CD4-positive, alpha-beta T cell (primary cell): ENCODE measurements at regions of chr16 and their contacts with region 1.

Region 1: GRCh38 chr16:66894948-66895688 is 14.8 kb downstream of the PDP2 start:
- DNase-seq: peak; percentile 27 to 80 (median 51)
- ATAC-seq: peak; percentile 93
- H3K4me3 ChIP-seq: no peak overlapping the region
- H3K4me3 Mint-ChIP-seq: no peak overlapping the region
- H3K27ac ChIP-seq: no peak overlapping the region
- H3K27ac Mint-ChIP-seq: no peak overlapping the region
- H3K4me1 ChIP-seq: peaks cover 10% of the 10 kb centered on the region
- H3K4me1 Mint-ChIP-seq: peaks cover 8% of the 10 kb centered on the region
- H3K27me3 ChIP-seq: no peaks in the 10 kb centered on the region
- H3K27me3 Mint-ChIP-seq: no peaks in the 10 kb centered on the region
- CTCF ChIP-seq: peak; percentile 42

Region 2: DNA sequence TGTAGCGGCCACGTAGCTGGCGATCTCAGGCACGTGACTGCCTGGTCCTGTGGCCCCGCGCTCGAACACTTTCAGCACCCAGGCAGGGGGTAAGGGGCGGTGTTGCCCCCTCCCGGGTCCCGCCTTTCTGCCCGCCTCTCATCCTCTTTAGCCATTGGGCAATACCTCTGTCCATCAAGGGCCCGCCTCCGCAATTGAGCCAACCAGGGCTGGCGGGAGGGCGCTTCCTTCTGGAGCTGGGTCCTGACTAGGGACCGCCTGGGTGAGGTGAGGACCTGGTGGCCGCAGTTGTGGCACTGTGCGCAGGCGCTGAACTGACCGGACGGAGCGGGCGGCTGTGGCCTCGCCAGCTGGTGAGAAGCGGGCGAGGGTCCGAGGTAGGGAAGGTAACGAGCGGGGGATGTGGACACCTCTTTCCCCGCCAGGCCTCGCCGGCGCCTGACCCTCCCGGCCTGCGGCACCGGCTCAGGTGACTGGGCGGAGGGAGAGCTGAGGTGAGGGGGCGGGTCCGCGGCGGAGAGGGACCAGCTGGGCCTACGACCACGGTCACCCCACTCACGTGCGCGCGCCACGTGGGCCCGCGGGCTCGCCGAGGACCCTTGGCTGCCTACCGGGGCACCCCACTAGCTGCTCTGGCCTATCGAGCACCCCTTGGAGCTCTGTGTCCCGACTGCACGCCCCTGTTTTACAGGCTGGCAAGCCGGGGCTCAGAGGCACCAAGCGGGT is 14.7 kb before region 1 on chr16 and contains the start of gene PDP2:
- CTCF ChIA-PET with region 1: interaction called, 4 read pairs
- POLR2A ChIA-PET with region 1: interaction called, 10 read pairs
- intact Hi-C with region 1: no loop called
- DNase-seq: peak; percentile 74 to 95 (median 86)
- ATAC-seq: peak; percentile 98
- H3K4me3 ChIP-seq: peak within 1 kb of the TSS; percentile 93
- H3K4me3 Mint-ChIP-seq: peak within 1 kb of the TSS; percentile 100
- H3K27ac ChIP-seq: no peak within 1 kb of the TSS
- H3K27ac Mint-ChIP-seq: peak within 1 kb of the TSS; percentile 75
- H3K4me1 ChIP-seq: peaks cover 32% of the 10 kb centered on the region
- H3K4me1 Mint-ChIP-seq: peaks cover 33% of the 10 kb centered on the region
- H3K27me3 ChIP-seq: no peaks in the 10 kb centered on the region
- H3K27me3 Mint-ChIP-seq: no peaks in the 10 kb centered on the region
- CTCF ChIP-seq: no peak
- total RNA-seq, gene PDP2: 3.3 to 5.9 TPM

Region 3: GRCh38 chr16:66928702-66929388 is 33.7 kb after region 1 on chr16:
- CTCF ChIA-PET with region 1: interaction called, 8 read pairs
- POLR2A ChIA-PET with region 1: no interaction called
- intact Hi-C with region 1: loop called in 1 of 2 experiments (anchors 2 kb)
- DNase-seq: peak in 5 of 14 experiments; percentile 19 to 51 (median 32)
- ATAC-seq: peak; percentile 30
- H3K4me3 ChIP-seq: no peak overlapping the region
- H3K4me3 Mint-ChIP-seq: no peak overlapping the region
- H3K27ac ChIP-seq: no peak overlapping the region
- H3K27ac Mint-ChIP-seq: no peak overlapping the region
- H3K4me1 ChIP-seq: peaks cover 33% of the 10 kb centered on the region
- H3K4me1 Mint-ChIP-seq: peaks cover 30% of the 10 kb centered on the region
- H3K27me3 ChIP-seq: peaks cover 21 to 24% of the 10 kb centered on the region in 2 experiments
- H3K27me3 Mint-ChIP-seq: peaks cover 37% of the 10 kb centered on the region
- CTCF ChIP-seq: no peak

Region 4: DNA sequence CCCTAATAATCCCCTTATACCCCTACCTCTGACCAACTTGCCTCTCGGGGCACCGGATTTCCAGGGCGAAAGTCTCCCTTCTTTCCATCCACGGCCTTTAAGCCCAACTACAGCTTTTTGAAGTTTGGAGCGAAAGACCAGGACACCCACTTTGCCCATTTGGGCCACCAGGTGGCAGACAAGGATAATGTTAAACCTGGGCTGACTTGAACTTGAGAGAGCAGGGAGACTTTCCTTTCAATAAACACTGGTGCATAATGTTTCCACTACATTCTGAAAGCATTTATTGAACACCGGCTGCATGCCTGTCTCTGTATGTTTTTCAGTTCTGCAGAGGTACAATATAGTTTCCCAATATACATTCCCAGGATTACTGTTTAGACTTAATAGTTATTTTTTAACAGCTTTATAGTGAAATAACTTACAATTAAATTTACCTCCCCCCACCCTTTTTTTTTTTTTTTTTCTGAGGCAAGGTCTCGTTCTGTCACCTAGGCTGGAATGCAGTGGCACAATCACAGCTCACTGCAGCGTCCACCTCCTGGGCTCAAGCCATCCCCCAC is 59.1 kb after region 1 on chr16:
- CTCF ChIA-PET with region 1: interaction called, 3 read pairs
- POLR2A ChIA-PET with region 1: no interaction called
- intact Hi-C with region 1: loop called (anchors 1 to 5 kb)
- DNase-seq: peak; percentile 52 to 83 (median 68)
- ATAC-seq: peak; percentile 95
- H3K4me3 ChIP-seq: no peak overlapping the region
- H3K4me3 Mint-ChIP-seq: no peak overlapping the region
- H3K27ac ChIP-seq: no peak overlapping the region
- H3K27ac Mint-ChIP-seq: no peak overlapping the region
- H3K4me1 ChIP-seq: peaks cover 5% of the 10 kb centered on the region
- H3K4me1 Mint-ChIP-seq: peaks cover 4% of the 10 kb centered on the region
- H3K27me3 ChIP-seq: peaks cover 15 to 17% of the 10 kb centered on the region in 2 experiments
- H3K27me3 Mint-ChIP-seq: peaks cover 47% of the 10 kb centered on the region
- CTCF ChIP-seq: peak; percentile 79